GM12878 (cell line): ENCODE measurements at regions of chr12 and their contacts with region 1.

Region 1: DNA sequence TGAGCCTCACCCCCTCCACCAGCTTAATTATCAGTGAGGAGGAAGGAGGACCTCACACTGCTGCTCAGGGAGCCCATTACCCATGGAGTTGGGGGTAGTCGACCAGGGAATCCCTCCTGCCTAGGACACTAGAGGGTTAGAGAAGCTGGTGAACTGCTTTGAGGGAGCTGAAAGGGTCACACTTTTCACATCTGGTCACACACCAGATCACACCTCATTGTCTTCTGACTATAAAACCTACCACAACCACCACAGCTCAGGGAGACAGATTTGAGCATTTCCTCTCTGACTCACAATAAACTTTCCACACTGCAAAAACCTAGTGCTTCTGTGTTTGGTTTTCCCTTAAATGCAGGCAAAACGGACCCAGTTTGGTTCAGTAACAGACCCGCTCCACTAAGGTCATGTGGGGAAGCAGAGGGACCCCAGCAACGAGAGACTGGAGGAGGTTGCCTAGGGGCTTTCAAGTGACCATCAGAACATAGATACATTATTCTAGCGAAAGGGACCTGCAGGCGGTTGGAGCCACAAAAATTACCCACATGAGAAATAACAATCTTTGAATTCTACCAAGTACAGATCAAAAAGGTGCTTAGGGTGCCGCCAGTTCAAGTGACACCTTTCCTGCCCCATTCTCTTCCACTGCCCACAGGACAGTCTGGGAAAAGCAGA is 151.4 kb upstream of the AVPR1A start:
- DNase-seq: peak; percentile 41
- ATAC-seq: peak; percentile 86
- H3K4me3 ChIP-seq: no peak overlapping the region
- H3K27ac ChIP-seq: no peak overlapping the region
- H3K4me1 ChIP-seq: no peaks in the 10 kb centered on the region
- H3K27me3 ChIP-seq: no peaks in the 10 kb centered on the region
- CTCF ChIP-seq: no peak
- EP300 ChIP-seq: peak; percentile 3 to 64; a peak in 2 of 4 replicates
- POLR2A ChIP-seq: no peak
- RAD21 ChIP-seq: no peak

Region 2: GRCh38 chr12:63319336-63319735 is 16.9 kb after region 1 on chr12:
- CTCF ChIA-PET with region 1: no interaction called
- POLR2A ChIA-PET with region 1: no interaction called
- RAD21 ChIA-PET with region 1: no interaction called
- SMC1A ChIA-PET with region 1: no interaction called
- in situ Hi-C with region 1: no loop called
- intact Hi-C with region 1: no loop called
- DNase-seq: no peak
- ATAC-seq: peak; percentile 73
- H3K4me3 ChIP-seq: no peak overlapping the region
- H3K27ac ChIP-seq: no peak overlapping the region
- H3K4me1 ChIP-seq: no peaks in the 10 kb centered on the region
- H3K27me3 ChIP-seq: no peaks in the 10 kb centered on the region
- CTCF ChIP-seq: no peak; a peak in 1 of 6 replicates
- EP300 ChIP-seq: no peak
- POLR2A ChIP-seq: no peak
- RAD21 ChIP-seq: no peak

Region 3: GRCh38 chr12:63396135-63396534 is 93.7 kb after region 1 on chr12:
- CTCF ChIA-PET with region 1: no interaction called
- POLR2A ChIA-PET with region 1: no interaction called
- RAD21 ChIA-PET with region 1: no interaction called
- SMC1A ChIA-PET with region 1: no interaction called
- in situ Hi-C with region 1: no loop called
- intact Hi-C with region 1: loop called (anchors 5 kb)
- DNase-seq: no peak
- ATAC-seq: peak; percentile 73
- H3K4me3 ChIP-seq: no peak overlapping the region
- H3K27ac ChIP-seq: no peak overlapping the region
- H3K4me1 ChIP-seq: no peaks in the 10 kb centered on the region
- H3K27me3 ChIP-seq: no peaks in the 10 kb centered on the region
- CTCF ChIP-seq: no peak
- EP300 ChIP-seq: no peak
- POLR2A ChIP-seq: no peak
- RAD21 ChIP-seq: no peak